Lower lobe of right lung (tissue), 2 donors: ENCODE measurements at regions of chr6 and their contacts with region 1.

Region 1: GRCh38 chr6:35449287-35449881 is 2.8 kb upstream of the FANCE start:
- DNase-seq: no peak
- ATAC-seq: peak; percentile 62 to 69
- H3K4me3 ChIP-seq: no peak overlapping the region
- H3K27ac ChIP-seq: no peak overlapping the region
- H3K4me1 ChIP-seq: peaks cover 30% of the 10 kb centered on the region
- H3K27me3 ChIP-seq: no peaks in the 10 kb centered on the region
- CTCF ChIP-seq: peak; percentile 77

Region 2: DNA sequence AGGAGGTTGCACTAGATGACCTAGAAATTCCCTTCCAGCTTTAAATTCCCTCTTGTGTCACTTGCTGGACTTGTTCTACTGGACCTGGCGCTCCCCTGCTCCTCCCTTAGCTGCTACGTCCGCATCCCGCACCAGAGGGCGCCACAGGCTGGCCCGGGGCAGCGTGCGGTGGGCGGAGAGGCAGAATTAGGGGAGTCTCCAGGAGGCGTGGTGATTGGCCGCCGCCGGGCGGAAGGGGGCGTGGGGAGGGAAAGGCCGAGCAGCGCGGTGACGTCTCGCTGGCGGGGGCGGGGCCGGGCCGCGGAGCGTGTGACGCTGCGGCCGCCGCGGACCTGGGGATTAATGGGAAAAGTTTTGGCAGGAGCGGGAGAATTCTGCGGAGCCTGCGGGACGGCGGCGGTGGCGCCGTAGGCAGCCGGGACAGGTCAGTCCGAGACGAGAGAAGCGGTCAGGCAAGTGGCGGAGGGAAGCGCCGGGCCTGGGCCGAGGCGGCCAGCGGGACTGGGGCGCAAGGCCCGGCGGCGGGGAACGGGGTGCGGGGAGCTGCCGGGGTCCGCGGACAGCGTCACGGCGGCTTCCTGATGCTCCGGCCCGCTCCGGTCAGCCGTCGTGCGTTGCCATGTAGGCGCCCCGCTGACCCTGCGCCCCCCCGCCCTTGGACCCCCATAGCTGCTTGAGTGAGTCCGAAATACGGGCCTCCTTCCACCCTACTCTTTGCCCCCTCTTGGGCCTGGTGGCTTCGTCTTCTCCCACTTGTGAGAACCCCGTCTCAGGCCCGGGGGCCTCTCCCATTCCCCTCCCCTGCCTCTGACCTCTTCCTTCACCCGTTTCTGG is 106.9 kb before region 1 on chr6 and contains the start of gene PPARD:
- intact Hi-C with region 1: loop called (anchors 10 kb)
- DNase-seq: peak; percentile 99
- ATAC-seq: peak; percentile 99 to 100
- H3K4me3 ChIP-seq: peak within 1 kb of the TSS; percentile 90
- H3K27ac ChIP-seq: peak within 1 kb of the TSS; percentile 90
- H3K4me1 ChIP-seq: peaks cover 26% of the 10 kb centered on the region
- H3K27me3 ChIP-seq: no peaks in the 10 kb centered on the region
- CTCF ChIP-seq: peak; percentile 97
- total RNA-seq, gene PPARD: 30.2 TPM